ENCODE measurements at regions of chr11 and their contacts with region 1.

Region 1: DNA sequence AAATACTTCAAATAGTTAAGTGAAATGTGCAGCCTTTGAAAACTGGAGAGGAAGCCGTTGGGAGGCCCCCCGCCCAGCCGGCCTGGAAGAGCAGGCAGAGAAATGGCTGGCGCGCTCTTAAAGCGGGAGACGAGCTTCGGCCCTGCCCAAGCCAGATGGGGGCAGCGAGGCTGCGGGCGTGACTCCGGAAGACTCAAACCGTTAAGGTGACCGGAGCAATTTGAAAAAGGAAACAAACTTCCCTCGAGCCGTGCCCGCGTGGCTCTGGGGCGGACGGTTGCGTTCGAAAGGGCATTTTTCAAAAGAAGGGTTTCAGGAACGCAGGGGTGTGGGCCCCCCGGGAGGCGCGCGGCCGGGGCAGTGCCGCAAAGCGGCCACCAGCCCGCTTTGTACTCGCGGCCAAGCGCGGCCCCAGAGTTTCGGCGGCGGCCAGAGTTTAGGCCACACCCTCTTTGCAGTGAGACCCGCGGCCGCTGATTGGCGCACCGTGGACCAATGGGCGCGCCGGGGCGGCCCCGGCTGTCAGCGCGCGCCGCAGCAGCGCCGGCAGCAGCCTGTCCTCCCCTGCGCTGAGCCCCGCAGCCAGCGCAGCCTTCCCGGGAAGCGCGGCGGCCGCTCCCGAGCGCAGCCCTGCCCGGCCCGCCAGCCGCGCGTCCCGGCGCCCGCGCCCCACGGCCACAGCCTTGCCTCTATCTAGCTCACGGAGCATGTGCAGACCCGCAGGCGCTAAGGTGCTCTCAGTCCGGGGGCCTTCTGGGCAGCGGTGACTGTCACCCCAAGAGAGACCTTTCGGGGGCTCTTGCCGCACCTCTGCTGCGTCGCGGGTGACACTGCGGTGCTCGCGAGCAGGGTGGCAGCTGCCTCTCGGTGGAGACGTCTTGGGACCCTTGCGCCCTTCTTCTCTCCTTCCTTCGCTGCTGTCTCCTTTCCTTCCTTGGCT is at the start of gene NAV2:
- DNase-seq: peak; percentile 93
- H3K4me3 ChIP-seq: peak within 1 kb of the TSS; percentile 65 to 82 (median 72)
- H3K27ac ChIP-seq: peak within 1 kb of the TSS; percentile 85
- H3K4me1 ChIP-seq: peaks cover 45% of the 10 kb centered on the region
- H3K27me3 ChIP-seq: no peaks in the 10 kb centered on the region
- CTCF ChIP-seq: no peak
- total RNA-seq, gene NAV2: 38.4 to 46.2 TPM

Region 2: DNA sequence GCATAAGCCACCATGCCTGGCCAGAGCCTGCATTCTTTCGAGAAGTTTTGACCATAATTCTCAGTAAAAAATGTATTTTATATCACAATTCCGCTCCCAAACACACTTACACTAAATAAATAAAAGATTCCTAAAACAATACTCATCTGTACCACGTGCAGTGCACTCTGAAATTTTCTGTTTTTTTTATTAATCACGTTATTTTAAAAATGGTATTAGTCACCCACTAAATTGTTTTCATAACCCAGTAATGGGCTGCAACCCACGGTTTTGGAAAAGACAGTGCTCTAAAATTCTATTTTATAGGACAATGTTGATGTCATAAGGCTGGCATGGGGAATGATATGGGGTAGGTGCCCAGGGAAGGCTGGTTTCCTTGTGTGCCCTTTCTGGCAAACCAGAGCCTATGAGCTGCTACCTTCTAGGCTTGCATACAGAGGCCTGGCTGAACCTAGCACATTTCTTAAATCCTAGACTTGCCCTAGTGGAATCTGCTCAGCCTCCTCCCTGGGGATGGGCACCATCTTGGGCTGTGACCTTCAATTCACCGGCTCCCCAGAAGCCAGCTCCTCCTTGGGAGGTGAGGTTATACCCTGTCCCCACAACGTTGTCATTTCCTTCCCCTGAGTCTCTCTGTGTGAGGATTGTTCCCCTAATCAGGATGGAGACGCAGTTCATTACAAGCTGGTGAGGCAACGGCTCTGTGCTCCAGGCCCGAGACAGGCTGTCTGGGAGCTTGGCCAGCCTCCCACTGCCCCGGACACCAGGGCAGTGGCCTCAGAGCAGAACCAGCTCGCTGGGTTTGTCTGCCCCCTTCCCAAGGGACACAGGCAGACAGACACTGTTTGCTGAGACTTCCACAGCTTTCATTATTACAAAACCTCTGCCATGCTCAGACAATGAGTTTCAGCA is 116.5 kb before region 1 on chr11:
- CTCF ChIA-PET with region 1: no interaction called
- dilution Hi-C with region 1: no loop called
- in situ Hi-C with region 1: no loop called
- intact Hi-C with region 1: loop called (anchors 10 kb)
- DNase-seq: peak; percentile 75
- H3K4me3 ChIP-seq: no peak overlapping the region
- H3K27ac ChIP-seq: no peak overlapping the region
- H3K4me1 ChIP-seq: peaks cover 21% of the 10 kb centered on the region
- H3K27me3 ChIP-seq: no peaks in the 10 kb centered on the region
- CTCF ChIP-seq: no peak

Region 3: DNA sequence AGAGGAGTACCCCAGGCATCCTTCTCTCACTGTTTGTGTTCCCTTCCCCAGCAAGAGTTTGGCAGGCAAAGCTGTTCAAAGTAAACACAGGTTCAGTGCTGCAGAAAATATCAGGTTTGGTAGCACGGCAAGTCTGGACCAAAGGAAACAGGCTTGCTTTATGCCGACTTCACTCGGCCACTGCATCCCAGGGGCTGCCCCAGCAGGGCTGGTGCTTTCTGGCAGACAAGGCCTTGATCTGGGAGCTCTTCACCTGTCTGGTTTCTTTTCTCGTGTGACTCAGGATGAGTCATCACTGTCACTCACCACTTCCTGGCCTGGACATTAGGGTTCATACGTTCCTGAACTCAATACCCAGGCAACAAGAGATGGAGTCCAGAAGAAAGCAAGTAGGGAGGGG is 52.5 kb before region 1 on chr11:
- CTCF ChIA-PET with region 1: no interaction called
- dilution Hi-C with region 1: no loop called
- in situ Hi-C with region 1: no loop called
- intact Hi-C with region 1: loop called (anchors 2 kb)
- DNase-seq: peak; percentile 98
- H3K4me3 ChIP-seq: no peak overlapping the region
- H3K27ac ChIP-seq: peak overlapping the region; percentile 69
- H3K4me1 ChIP-seq: peaks cover 39% of the 10 kb centered on the region
- H3K27me3 ChIP-seq: no peaks in the 10 kb centered on the region
- CTCF ChIP-seq: no peak

Region 4: GRCh38 chr11:19669511-19669910 is 43.0 kb before region 1 on chr11:
- CTCF ChIA-PET with region 1: no interaction called
- dilution Hi-C with region 1: no loop called
- in situ Hi-C with region 1: no loop called
- intact Hi-C with region 1: loop called (anchors 2 kb)
- DNase-seq: no peak
- H3K4me3 ChIP-seq: no peak overlapping the region
- H3K27ac ChIP-seq: peak overlapping the region; percentile 82
- H3K4me1 ChIP-seq: peaks cover 66% of the 10 kb centered on the region
- H3K27me3 ChIP-seq: no peaks in the 10 kb centered on the region
- CTCF ChIP-seq: no peak

Measured in mammary epithelial cell (primary cell).